ENCODE measurements at regions of chr1 and their contacts with region 1.

Region 1: DNA sequence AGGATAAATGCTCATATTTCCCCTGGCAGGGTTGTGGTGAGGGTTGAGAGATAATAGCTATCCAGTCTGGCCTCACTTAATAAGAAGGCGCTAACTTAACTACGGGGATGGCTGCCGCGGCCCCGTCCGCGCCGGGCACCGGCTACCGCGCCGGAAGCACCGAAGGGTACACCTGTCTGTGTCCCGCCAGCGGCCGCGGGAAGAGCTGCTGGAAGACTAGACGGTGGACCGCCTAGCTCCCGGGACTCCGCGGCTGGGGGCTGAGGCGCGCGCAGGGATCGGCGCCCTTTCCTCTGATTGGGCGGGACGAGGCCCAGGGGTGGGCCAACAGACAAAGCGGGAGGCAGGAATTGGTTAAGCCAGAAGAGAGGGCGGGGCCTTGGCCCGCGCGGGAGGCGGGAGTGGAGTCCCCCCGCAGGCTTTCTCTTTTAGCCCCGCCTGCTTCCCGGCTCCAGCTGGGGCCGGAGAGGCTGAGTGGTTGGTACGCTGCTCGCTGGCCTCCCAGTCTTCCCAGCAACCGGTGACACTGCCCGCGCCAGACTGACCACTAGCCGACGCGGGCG is at the start of gene ZNF672:
- DNase-seq: peak; percentile 97
- ATAC-seq: peak; percentile 91
- H3K4me3 Mint-ChIP-seq: no peak within 1 kb of the TSS
- H3K27ac Mint-ChIP-seq: no peak within 1 kb of the TSS
- H3K4me1 Mint-ChIP-seq: peaks cover 25% of the 10 kb centered on the region
- H3K27me3 Mint-ChIP-seq: peaks cover 6% of the 10 kb centered on the region
- total RNA-seq, gene ZNF672: 53.8 to 72.3 TPM

Region 2: GRCh38 chr1:248739572-248740205 is 98.2 kb before region 1 on chr1:
- CTCF ChIA-PET with region 1: no interaction called
- DNase-seq: no peak
- ATAC-seq: no peak
- H3K4me3 Mint-ChIP-seq: no peak overlapping the region
- H3K27ac Mint-ChIP-seq: no peak overlapping the region
- H3K4me1 Mint-ChIP-seq: no peaks in the 10 kb centered on the region
- H3K27me3 Mint-ChIP-seq: peaks cover 8% of the 10 kb centered on the region

Region 3: DNA sequence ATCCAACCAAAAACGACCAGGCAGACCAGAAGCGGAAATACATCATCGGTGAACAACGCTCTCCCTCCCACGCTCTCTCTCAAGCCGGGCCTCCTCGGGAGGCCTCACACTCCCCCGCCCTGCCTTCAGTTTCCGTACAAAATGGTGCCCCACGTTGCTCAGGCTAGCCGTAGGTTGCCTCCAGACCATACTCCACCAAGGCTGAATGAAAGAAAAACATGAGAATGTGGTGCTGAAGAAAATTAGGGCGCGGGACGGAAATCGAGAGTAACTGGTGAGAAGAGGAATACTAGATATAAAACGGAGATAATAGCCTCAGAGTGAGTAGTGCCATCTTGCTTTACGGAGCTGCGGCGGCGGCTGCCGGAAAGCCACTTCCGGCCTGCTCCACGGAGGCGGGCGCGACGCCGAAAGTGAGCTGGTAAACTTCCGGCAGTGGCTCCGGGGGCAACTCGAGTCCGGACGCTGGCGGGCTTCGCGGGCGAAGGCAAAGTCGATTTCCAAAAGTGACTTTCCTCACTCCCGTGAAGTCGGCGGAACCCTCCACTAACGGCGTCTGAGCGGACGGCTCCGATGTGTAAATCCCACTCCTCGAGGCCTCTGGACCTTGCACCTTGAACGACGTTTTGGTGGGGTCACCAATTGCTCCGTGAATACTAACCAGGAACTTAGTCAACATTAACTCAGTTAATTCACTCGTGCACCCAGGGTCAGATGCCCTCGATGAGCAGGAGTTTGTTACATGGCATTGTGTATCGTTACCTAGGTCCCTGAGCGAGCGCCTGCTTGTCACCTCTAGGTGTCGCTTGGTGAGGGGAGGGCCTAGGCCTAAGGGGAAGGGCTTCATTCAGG is 11.7 kb before region 1 on chr1 and contains the start of gene SH3BP5L:
- CTCF ChIA-PET with region 1: interaction called, 57 read pairs
- DNase-seq: peak; percentile 95
- ATAC-seq: peak; percentile 90
- H3K4me3 Mint-ChIP-seq: peak within 1 kb of the TSS; percentile 86
- H3K27ac Mint-ChIP-seq: peak within 1 kb of the TSS; percentile 96
- H3K4me1 Mint-ChIP-seq: peaks cover 48% of the 10 kb centered on the region
- H3K27me3 Mint-ChIP-seq: no peaks in the 10 kb centered on the region
- total RNA-seq, gene SH3BP5L: 27.4 to 27.9 TPM

Measured in activated CD8-positive, alpha-beta memory T cell treated with anti-CD3 and anti-CD28 coated beads, Interleukin-2, amount 10 ng/mL, durations not matched to agents 7 days and 5 days (primary cell).